ENCODE measurements at regions of chr9 and their contacts with region 1.

Region 1: DNA sequence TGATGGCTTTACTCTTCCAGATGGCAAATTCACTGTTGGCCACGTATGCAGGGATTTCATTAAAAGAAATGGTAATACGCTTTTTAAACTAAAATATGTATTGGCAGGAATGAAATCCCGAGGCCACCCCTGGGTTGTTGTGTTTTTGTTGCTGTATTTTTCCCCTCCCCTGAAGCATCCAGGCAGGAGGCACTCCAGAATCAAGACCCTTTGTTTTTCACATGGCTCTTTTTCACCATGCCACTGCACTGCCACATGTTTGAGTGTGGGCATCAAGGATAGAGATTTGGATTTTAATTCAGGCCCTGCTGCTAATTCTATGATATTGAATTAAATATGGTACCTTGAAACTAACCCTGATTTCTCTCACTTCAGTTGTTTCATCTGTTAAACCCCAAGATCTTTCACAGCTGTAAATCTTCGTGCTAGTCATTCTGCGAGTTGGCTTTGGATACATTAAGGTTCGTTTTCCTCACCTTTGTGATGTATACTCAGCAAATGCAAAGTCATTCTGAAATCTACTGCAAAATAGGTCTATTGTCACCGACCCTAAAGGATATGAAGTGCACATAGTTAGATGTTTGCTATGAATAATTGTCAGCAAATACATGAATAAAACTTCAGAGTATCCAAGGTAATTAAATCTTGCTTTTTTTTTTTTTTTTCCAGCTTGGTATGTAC is 533.4 kb downstream of the PTPRD start:
- DNase-seq: no peak
- ATAC-seq: no peak
- H3K4me3 ChIP-seq: no peak overlapping the region
- H3K27ac ChIP-seq: no peak overlapping the region
- H3K4me1 ChIP-seq: no peaks in the 10 kb centered on the region
- H3K27me3 ChIP-seq: no peaks in the 10 kb centered on the region
- CTCF ChIP-seq: no peak

Region 2: GRCh38 chr9:10104774-10105173 is 25.4 kb after region 1 on chr9:
- intact Hi-C with region 1: loop called in 1 of 10 experiments (anchors 2 kb)
- DNase-seq: no peak
- ATAC-seq: no peak
- H3K4me3 ChIP-seq: no peak overlapping the region
- H3K27ac ChIP-seq: no peak overlapping the region
- H3K4me1 ChIP-seq: peaks cover 0 to 10% (median 0%) of the 10 kb centered on the region in 9 donors
- H3K27me3 ChIP-seq: no peaks in the 10 kb centered on the region
- CTCF ChIP-seq: no peak